ENCODE measurements at regions of chr5 and their contacts with region 1.

Region 1: DNA sequence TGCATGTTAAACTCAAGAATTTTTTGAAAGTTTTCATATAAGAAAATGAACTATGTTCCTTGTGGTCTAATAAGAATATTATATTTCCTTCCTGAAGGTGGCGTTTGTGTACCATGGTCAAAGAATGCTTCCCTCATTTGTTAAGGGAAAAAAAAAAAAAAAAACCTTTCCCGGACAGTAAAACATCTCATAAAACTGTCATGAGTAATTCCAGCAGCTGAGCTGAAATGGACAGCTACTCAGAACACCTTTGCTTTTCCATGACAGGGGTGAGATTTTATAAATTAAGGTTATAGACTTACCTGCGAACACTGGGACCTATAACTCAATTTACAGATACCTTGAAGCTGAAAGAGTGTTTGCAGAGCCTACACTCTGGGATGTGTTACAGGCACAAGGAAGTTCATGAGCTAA is 113.2 kb upstream of the RANBP3L start:
- DNase-seq: no peak
- H3K4me3 ChIP-seq: no peak overlapping the region
- H3K27ac ChIP-seq: no peak overlapping the region
- H3K4me1 ChIP-seq: no peaks in the 10 kb centered on the region
- H3K27me3 ChIP-seq: no peaks in the 10 kb centered on the region
- CTCF ChIP-seq: peak; percentile 33 to 60 (median 37)

Region 2: DNA sequence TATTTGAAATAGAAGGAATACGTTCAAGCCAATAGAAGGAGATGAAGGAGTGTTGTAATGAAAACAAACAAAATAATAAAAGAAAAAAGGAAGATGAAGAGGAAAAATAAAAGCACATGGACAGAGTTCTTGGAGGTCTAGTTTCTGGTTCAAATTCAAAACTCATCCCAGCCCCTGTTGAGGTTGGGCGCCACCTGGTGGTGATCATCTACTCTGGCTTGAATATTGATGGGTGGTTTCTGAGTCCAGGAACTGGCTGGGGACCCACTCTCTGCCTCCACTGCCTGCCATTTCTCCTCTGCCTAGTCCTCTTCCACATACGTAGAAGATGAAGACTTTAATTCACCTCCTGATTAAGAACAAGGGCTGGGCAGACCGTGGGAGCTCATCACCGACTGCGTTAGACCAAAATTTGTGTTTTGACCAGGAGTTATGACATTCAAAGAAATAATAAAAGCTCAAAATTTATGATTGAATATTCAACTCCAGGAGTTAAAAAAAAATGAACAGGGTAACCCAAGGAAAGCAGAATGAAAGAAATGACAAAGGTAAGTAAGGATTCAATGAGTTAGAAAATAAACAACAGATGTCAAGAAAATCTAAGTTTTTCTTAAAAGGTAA is 92.6 kb after region 1 on chr5:
- intact Hi-C with region 1: loop called (anchors 1 kb)
- DNase-seq: peak in 1 of 2 donors; percentile 86
- H3K4me3 ChIP-seq: no peak overlapping the region
- H3K27ac ChIP-seq: no peak overlapping the region
- H3K4me1 ChIP-seq: no peaks in the 10 kb centered on the region
- H3K27me3 ChIP-seq: no peaks in the 10 kb centered on the region
- CTCF ChIP-seq: peak; percentile 47 to 77 (median 67)

Region 3: DNA sequence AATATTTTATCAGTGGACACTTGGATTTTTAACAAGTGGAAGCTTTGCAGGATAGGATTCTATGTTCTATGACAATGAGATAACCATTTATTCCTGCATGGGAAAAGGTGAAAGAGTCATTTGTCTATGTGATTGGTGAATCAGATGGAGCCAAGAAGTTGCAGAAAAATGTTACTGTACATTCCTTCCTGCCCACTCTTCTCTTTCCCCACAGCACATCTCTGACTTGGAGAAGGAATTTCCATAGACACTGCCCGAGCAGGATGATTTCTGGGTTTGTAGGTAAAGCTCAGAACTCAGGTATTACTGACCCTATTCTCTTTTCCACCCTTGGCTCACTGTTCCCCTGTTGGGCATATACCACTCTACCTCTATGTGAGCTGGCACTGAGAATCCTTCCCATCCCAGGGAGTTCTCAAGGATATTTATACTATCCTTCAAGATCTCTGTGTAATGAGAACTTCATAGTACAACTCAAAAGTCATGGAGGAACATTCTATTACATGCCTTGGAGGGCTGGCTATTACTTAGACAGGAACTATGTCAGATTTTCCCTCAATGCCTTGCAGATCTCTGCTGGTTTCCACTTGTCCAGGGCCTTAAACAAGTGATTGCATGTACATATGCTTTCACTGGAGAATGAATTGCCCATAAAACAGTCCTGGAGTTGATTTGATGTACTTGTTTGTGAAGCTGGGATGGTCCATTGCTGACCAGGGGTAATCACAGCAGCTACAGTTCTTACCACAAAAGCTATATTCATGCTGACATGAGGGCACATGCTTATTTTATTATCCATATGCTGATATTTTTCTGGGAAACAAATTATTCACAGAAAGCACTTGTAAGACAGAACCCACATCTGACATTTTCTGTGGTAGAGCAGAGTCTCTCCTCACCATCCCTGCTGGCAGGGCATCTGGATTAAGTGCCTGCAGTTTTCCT is 215.6 kb after region 1 on chr5:
- intact Hi-C with region 1: no loop called
- DNase-seq: no peak
- H3K4me3 ChIP-seq: no peak overlapping the region
- H3K27ac ChIP-seq: no peak overlapping the region
- H3K4me1 ChIP-seq: no peaks in the 10 kb centered on the region
- H3K27me3 ChIP-seq: no peaks in the 10 kb centered on the region
- CTCF ChIP-seq: no peak

Region 4: DNA sequence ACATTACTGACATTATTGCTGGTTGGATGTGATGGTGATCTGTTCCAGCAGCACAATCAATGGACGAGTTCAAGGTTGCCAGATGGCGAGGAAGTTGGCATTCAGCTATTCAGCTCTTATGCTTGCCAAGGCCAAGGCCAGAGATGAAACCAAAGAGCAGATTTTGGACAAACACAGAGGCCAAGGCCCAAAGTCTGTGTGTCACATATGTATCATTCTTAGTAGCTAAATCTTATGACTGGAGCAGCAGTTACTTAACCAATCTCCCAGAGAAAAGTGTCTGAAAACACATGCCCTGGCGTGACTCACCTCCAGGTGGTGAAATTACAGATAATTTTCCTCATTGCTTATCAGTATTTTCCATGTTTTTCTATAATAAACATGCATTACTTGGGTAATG is 1654.5 kb after region 1 on chr5:
- intact Hi-C with region 1: no loop called
- DNase-seq: no peak
- H3K4me3 ChIP-seq: no peak overlapping the region
- H3K27ac ChIP-seq: no peak overlapping the region
- H3K4me1 ChIP-seq: no peaks in the 10 kb centered on the region
- H3K27me3 ChIP-seq: no peaks in the 10 kb centered on the region
- CTCF ChIP-seq: no peak

Measured in ascending aorta (tissue), 2 donors.